PC-3 (cell line): ENCODE measurements at regions of chr12 and their contacts with region 1.

Region 1: DNA sequence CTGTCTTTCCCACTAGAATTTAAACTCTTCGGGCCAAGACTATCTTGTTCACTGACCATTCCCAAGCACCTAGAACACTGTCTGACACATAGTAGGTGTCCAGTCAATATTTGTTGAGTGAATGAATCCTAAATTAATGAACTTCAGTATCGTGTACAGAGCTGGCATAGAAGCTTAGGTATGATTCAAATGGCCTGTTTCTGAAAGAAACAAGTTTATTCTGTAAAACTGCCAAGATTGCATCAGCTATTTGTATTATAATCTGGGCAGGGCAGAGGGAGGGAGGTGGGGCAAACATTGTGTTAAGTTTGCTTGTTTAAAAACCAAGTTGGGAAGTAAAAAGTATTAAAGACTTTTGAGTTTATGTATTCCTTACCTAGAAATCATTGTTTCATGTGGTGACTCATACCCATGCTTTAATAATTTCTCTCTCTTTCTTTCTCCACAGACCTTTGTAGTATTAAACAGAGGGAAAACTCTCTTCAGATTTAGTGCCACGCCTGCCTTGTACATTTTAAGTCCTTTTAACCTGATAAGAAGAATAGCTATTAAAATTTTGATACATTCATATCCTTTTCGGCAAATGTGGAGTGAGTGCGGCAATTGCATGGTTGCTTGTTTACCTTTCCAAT is 92.8 kb downstream of the SCN8A start:
- DNase-seq: peak; percentile 93
- ATAC-seq: peak; percentile 88
- H3K4me3 ChIP-seq: peak overlapping the region; percentile 24; the same call in 1 of the 2 replicates
- H3K27ac ChIP-seq: peak overlapping the region; percentile 52
- H3K4me1 ChIP-seq: peaks cover 42% of the 10 kb centered on the region
- H3K27me3 ChIP-seq: no peaks in the 10 kb centered on the region
- CTCF ChIP-seq: no peak

Region 2: GRCh38 chr12:51622564-51622963 is 61.3 kb before region 1 on chr12:
- CTCF ChIA-PET with region 1: no interaction called
- POLR2A ChIA-PET with region 1: no interaction called
- intact Hi-C with region 1: loop called (anchors 5 kb)
- DNase-seq: peak; percentile 65
- ATAC-seq: peak; percentile 62
- H3K4me3 ChIP-seq: no peak overlapping the region
- H3K27ac ChIP-seq: peak overlapping the region; percentile 78
- H3K4me1 ChIP-seq: peaks cover 32% of the 10 kb centered on the region
- H3K27me3 ChIP-seq: no peaks in the 10 kb centered on the region
- CTCF ChIP-seq: no peak

Region 3: DNA sequence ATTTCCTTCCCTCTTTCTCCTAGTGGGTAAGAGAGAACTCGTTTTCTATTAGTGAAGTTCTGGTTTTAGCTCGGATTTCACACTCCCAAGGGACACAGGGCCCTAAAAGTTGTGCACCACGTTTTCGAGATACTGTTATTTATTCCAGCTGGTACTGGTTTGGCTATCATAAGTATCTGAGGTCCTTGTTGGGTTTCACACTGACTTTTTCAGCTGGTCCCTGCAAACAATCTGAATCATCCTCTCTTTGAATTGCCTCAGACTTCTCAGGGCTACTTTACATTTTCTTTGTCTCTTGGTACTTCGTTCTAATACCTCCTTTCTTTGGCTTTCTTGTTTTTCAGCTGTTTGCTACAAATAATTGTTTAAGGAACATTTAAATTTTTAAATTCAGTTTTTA is 17.1 kb before region 1 on chr12:
- CTCF ChIA-PET with region 1: no interaction called
- POLR2A ChIA-PET with region 1: no interaction called
- intact Hi-C with region 1: no loop called
- DNase-seq: no peak
- ATAC-seq: no peak
- H3K4me3 ChIP-seq: no peak overlapping the region
- H3K27ac ChIP-seq: no peak overlapping the region
- H3K4me1 ChIP-seq: no peaks in the 10 kb centered on the region
- H3K27me3 ChIP-seq: no peaks in the 10 kb centered on the region
- CTCF ChIP-seq: no peak